ENCODE measurements at regions of chr15 and their contacts with region 1.

Region 1: DNA sequence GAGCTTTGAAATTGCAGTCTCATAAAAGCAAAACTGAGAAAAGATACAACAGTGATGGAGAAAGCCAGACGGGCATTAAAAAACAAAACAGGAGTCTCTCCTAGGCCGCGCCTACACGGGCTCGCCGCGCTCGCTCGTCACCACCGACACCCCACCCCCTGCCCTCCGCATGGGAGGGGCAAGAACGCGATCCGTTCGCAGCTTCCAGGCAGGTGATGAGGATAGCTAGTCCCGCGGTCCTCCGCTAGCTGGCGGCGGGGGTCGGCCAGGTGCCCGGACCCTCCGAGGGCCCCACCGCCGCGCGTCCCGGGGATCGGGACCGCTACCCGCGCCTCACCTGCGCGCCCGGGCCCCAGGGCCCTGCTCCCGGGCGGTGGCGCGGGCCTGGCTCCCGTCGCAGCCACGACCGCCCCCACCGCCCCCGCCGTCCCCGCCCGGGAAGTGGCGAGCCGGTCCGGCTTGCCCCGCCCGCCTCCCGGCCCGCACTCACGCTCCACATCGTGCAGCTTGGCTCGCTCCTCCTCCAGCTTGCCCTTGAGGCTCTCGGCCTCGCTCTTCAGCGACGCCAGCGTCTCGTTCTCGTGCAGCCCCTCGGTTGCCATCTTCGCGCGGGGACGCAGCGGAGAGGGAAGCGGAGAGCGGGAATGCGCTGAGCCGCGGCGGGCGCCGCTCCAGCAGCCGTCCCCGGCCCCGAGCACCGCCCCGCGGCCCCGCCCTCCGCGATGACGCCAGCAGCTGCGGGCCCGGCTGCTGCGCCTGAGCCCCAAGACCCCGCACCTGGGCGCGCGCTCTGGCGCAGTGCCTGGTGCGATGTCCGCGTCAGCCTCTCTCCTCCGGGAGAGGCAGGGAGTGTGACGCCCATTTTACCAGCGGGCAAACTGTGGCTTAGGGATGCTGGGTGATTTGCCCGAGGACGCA is 11.7 kb downstream of the GNB5 start:
- DNase-seq: peak; percentile 77 to 94 (median 88)
- ATAC-seq: peak; percentile 82
- H3K4me3 ChIP-seq: peak overlapping the region; percentile 79
- H3K4me3 Mint-ChIP-seq: peak overlapping the region; percentile 99
- H3K27ac ChIP-seq: peak overlapping the region; percentile 89 to 95
- H3K27ac Mint-ChIP-seq: peak overlapping the region; percentile 94
- H3K4me1 ChIP-seq: peaks cover 28% of the 10 kb centered on the region
- H3K4me1 Mint-ChIP-seq: peaks cover 47% of the 10 kb centered on the region
- H3K27me3 ChIP-seq: no peaks in the 10 kb centered on the region
- H3K27me3 Mint-ChIP-seq: no peaks in the 10 kb centered on the region
- CTCF ChIP-seq: no peak

Region 2: GRCh38 chr15:51971375-51972133 is 208.0 kb before region 1 on chr15 and contains the start of gene LEO1:
- CTCF ChIA-PET with region 1: interaction called, 3 read pairs
- POLR2A ChIA-PET with region 1: interaction called, 35 read pairs
- intact Hi-C with region 1: no loop called
- DNase-seq: peak; percentile 73 to 97 (median 83)
- ATAC-seq: peak; percentile 92
- H3K4me3 ChIP-seq: peak within 1 kb of the TSS; percentile 98
- H3K4me3 Mint-ChIP-seq: peak within 1 kb of the TSS; percentile 95
- H3K27ac ChIP-seq: peak within 1 kb of the TSS; percentile 79 to 85
- H3K27ac Mint-ChIP-seq: peak within 1 kb of the TSS; percentile 92
- H3K4me1 ChIP-seq: peaks cover 19% of the 10 kb centered on the region
- H3K4me1 Mint-ChIP-seq: peaks cover 28% of the 10 kb centered on the region
- H3K27me3 ChIP-seq: no peaks in the 10 kb centered on the region
- H3K27me3 Mint-ChIP-seq: no peaks in the 10 kb centered on the region
- CTCF ChIP-seq: peak; percentile 47
- total RNA-seq, gene LEO1: 6.2 to 6.7 TPM

Region 3: DNA sequence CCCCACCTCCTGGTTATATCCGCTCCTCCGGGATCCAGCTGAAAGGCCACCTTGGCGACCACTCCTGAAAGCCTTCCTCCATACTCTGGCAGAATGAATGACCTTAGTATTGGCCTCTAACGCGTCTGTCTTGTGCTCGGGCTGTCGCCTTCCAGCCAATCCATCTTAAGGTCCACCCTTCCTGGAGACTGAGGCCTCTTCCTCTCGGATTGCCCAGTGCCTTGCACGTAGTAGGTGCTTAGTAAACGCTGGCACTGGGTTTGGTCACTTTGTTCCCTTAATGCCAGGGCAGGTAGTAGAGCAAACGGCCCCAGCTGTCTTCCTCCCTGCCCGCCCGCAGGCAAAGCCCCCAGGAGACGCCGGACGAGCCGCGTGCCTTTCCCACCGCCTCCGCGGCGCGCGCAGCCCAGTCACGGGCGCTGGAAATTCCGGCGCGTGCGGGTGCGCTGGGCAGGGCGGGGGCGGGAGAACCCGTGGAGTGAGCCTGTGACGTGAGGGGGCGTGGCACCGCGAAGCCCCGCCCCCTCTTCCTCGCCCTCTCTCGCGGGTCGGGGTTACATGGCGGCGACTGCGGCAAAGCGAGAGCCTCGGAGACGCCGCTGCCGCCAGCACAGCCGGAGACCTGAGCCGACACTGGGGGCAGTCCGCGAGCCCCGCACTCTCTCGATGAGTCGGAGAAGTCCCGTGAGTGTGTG is 160.7 kb before region 1 on chr15 and contains the start of gene MAPK6:
- CTCF ChIA-PET with region 1: no interaction called
- POLR2A ChIA-PET with region 1: interaction called, 17 read pairs
- intact Hi-C with region 1: loop called in 1 of 2 experiments (anchors 5 kb)
- DNase-seq: peak; percentile 87 to 99 (median 92)
- ATAC-seq: peak; percentile 88
- H3K4me3 ChIP-seq: peak within 1 kb of the TSS; percentile 71
- H3K4me3 Mint-ChIP-seq: peak within 1 kb of the TSS; percentile 99
- H3K27ac ChIP-seq: peak within 1 kb of the TSS; percentile 79 to 87
- H3K27ac Mint-ChIP-seq: peak within 1 kb of the TSS; percentile 97
- H3K4me1 ChIP-seq: peaks cover 18% of the 10 kb centered on the region
- H3K4me1 Mint-ChIP-seq: peaks cover 34% of the 10 kb centered on the region
- H3K27me3 ChIP-seq: no peaks in the 10 kb centered on the region
- H3K27me3 Mint-ChIP-seq: no peaks in the 10 kb centered on the region
- CTCF ChIP-seq: no peak
- total RNA-seq, gene MAPK6: 48.5 to 49.8 TPM

Region 4: GRCh38 chr15:52163321-52164190 is 16.0 kb before region 1 on chr15:
- CTCF ChIA-PET with region 1: interaction called, 6 read pairs
- POLR2A ChIA-PET with region 1: interaction called, 40 read pairs
- intact Hi-C with region 1: no loop called
- DNase-seq: peak in 4 of 14 experiments; percentile 8 to 42 (median 38)
- ATAC-seq: peak; percentile 30
- H3K4me3 ChIP-seq: no peak overlapping the region
- H3K4me3 Mint-ChIP-seq: no peak overlapping the region
- H3K27ac ChIP-seq: no peak overlapping the region
- H3K27ac Mint-ChIP-seq: no peak overlapping the region
- H3K4me1 ChIP-seq: peaks cover 2% of the 10 kb centered on the region
- H3K4me1 Mint-ChIP-seq: peaks cover 38% of the 10 kb centered on the region
- H3K27me3 ChIP-seq: no peaks in the 10 kb centered on the region
- H3K27me3 Mint-ChIP-seq: no peaks in the 10 kb centered on the region
- CTCF ChIP-seq: peak; percentile 19

Region 5: GRCh38 chr15:52208306-52208946 is 28.9 kb after region 1 on chr15:
- CTCF ChIA-PET with region 1: interaction called, 16 read pairs
- POLR2A ChIA-PET with region 1: interaction called, 19 read pairs
- intact Hi-C with region 1: loop called (anchors 1 to 5 kb)
- DNase-seq: peak; percentile 58 to 82 (median 72)
- ATAC-seq: peak; percentile 100
- H3K4me3 ChIP-seq: no peak overlapping the region
- H3K4me3 Mint-ChIP-seq: no peak overlapping the region
- H3K27ac ChIP-seq: no peak overlapping the region
- H3K27ac Mint-ChIP-seq: no peak overlapping the region
- H3K4me1 ChIP-seq: no peaks in the 10 kb centered on the region
- H3K4me1 Mint-ChIP-seq: no peaks in the 10 kb centered on the region
- H3K27me3 ChIP-seq: no peaks in the 10 kb centered on the region
- H3K27me3 Mint-ChIP-seq: no peaks in the 10 kb centered on the region
- CTCF ChIP-seq: peak; percentile 84

Region 6: GRCh38 chr15:52227456-52227855 is 47.9 kb after region 1 on chr15:
- CTCF ChIA-PET with region 1: interaction called, 13 read pairs
- POLR2A ChIA-PET with region 1: interaction called, 64 read pairs
- intact Hi-C with region 1: loop called (anchors 2 to 5 kb)
- DNase-seq: peak; percentile 40 to 88 (median 61)
- ATAC-seq: peak; percentile 99
- H3K4me3 ChIP-seq: no peak overlapping the region
- H3K4me3 Mint-ChIP-seq: no peak overlapping the region
- H3K27ac ChIP-seq: no peak overlapping the region
- H3K27ac Mint-ChIP-seq: no peak overlapping the region
- H3K4me1 ChIP-seq: peaks cover 11% of the 10 kb centered on the region
- H3K4me1 Mint-ChIP-seq: peaks cover 22% of the 10 kb centered on the region
- H3K27me3 ChIP-seq: no peaks in the 10 kb centered on the region
- H3K27me3 Mint-ChIP-seq: no peaks in the 10 kb centered on the region
- CTCF ChIP-seq: peak; percentile 66

Region 7: DNA sequence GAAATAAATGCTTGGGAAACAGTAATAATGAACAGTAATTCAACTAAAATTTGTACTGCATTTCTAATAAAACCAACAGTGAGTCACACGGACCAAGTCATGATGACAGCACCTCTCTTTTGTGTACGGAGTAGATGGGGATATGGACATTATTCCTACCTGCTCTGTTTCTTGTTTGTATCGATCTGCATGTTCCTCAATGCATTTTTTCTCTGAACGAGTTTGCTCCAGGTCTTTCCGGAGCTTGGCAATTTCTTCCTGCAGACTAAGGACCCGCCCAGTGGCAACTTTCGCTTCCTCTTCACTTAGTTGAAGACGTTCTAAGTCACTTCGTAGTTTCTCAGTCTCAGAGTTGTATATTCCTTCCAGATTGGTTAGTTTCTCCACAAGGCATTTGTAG is 190.5 kb after region 1 on chr15:
- CTCF ChIA-PET with region 1: no interaction called
- POLR2A ChIA-PET with region 1: no interaction called
- intact Hi-C with region 1: no loop called
- DNase-seq: peak in 3 of 14 experiments; percentile 6 to 14 (median 9)
- ATAC-seq: no peak
- H3K4me3 ChIP-seq: no peak overlapping the region
- H3K4me3 Mint-ChIP-seq: no peak overlapping the region
- H3K27ac ChIP-seq: no peak overlapping the region
- H3K27ac Mint-ChIP-seq: no peak overlapping the region
- H3K4me1 ChIP-seq: no peaks in the 10 kb centered on the region
- H3K4me1 Mint-ChIP-seq: no peaks in the 10 kb centered on the region
- H3K27me3 ChIP-seq: no peaks in the 10 kb centered on the region
- H3K27me3 Mint-ChIP-seq: no peaks in the 10 kb centered on the region
- CTCF ChIP-seq: no peak

Measured in CD4-positive, alpha-beta T cell (primary cell).